ENCODE measurements at regions of chr14 and their contacts with region 1.

Region 1: DNA sequence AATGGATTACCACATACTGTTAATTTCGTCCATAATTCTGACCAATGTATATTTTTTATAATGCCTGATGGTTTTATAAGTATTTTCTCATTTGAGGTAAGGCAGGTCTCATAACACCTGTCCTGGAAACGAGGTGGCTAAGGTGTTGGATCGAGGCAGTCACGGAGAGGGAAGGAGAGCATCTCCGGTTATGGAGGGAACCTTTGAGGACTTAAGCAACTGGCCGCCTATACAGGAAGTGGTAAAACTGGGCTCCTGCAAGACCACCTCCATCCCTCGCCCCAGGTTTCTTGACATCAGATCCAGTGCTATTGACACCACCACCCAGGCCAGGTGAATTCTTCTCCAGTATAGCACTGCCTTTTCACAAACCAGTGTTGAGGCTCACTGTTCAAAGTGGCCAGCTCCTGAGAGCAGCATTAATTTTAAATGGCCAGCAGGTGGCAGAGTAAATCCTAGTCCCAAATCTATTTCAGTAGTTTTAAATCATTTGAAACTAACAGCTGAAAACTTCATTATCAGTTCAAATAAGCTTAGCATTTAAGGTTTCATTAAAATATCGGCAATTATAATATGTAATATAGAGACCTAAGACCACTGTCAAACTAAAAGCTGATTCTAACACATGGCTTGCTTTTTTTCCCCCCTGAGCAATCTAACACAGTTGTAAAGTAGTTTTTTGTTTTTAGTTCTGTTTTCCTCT is 100.8 kb downstream of the PPM1A start:
- DNase-seq: peak; percentile 83
- H3K4me3 ChIP-seq: peak overlapping the region; percentile 57
- H3K27ac ChIP-seq: peak overlapping the region; percentile 95
- H3K4me1 ChIP-seq: peaks cover 61% of the 10 kb centered on the region
- CTCF ChIP-seq: peak; percentile 96

Region 2: DNA sequence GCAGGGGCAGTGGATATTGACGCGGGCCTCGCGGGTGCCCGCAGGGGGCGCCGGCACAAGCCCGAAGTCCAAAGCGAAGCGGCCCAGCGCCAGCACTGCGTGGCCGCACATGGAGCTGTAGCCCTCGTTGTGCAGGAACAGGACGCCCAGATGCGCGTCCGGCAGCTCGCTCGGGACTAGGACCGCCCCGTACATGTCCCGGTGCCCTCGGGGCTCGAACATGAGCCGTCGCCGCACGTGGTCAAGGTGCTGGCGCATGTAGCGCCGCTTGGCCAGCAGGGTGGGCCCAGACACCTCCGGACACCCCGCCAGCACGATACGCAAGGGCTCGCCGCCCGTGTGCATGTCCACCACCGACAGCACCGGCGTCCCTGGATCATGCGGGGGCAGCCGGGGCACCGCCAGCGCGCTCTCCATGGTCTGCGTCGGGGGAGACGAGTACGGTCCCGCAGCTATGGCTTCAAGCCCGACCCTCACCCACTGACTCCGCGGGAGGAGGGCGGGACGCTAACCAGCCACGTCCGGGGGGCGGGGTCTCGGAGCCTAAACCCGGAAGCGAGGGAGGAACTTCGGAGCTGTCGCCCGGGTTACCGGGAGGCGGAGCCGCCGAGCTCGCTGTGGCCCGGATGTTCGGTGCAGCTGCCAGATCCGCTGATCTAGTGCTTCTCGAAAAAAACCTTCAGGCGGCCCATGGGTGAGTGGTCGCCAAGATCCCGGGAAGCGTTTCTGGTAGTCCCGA is 865.7 kb before region 1 on chr14 and contains the starts of genes JKAMP and L3HYPDH:
- CTCF ChIA-PET with region 1: no interaction called
- POLR2A ChIA-PET with region 1: no interaction called
- intact Hi-C with region 1: loop called (anchors 10 kb)
- DNase-seq: peak; percentile 98
- H3K4me3 ChIP-seq: peak within 1 kb of the TSS; percentile 87
- H3K27ac ChIP-seq: peak within 1 kb of the TSS; percentile 58
- H3K4me1 ChIP-seq: peaks cover 38% of the 10 kb centered on the region
- CTCF ChIP-seq: peak; percentile 69
- total RNA-seq, gene JKAMP: 19.7 and 24.9 TPM in 2 replicates
- total RNA-seq, gene L3HYPDH: 43.2 and 43.5 TPM in 2 replicates

Region 3: GRCh38 chr14:60091550-60092530 is 258.0 kb before region 1 on chr14 and contains the start of gene PCNX4:
- CTCF ChIA-PET with region 1: no interaction called
- POLR2A ChIA-PET with region 1: no interaction called
- intact Hi-C with region 1: loop called (anchors 5 kb)
- DNase-seq: peak; percentile 99
- H3K4me3 ChIP-seq: peak within 1 kb of the TSS; percentile 82
- H3K27ac ChIP-seq: peak within 1 kb of the TSS; percentile 86
- H3K4me1 ChIP-seq: peaks cover 33% of the 10 kb centered on the region
- CTCF ChIP-seq: no peak
- total RNA-seq, gene PCNX4: 47.0 and 49.1 TPM in 2 replicates

Region 4: DNA sequence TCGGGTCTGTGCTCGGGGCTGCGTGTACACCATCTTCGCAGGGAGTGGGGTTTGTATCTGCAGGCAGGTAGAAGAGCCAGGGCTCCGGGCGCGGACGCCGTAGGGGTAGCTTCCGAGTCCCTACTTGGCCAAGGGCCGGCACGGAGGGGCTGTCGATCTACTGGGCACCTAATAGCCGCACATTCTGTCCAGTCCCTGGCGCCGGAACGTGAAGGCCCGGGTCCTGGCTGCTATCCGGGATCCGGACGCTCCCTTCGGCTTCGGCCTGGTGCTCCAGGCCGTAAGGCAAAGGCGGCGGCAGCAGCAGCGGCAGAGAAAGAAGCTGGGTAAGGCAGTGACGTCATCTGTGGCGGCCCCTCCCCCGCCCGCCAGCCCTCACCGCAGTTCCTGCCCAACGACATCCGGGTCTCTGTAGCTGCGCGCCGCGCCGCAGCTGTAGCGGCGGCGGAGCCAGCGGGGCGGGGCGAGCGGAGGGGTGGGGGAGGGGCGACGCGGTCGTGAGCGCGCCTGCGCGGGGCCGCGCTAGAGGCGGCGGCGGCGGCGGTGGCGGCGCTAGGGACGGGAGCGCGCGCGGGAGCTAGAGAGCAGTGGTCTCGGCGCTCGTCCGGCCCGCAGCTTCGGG is 101.0 kb before region 1 on chr14 and contains the start of gene PPM1A:
- CTCF ChIA-PET with region 1: interaction called, 5 read pairs
- POLR2A ChIA-PET with region 1: interaction called, 15 read pairs
- intact Hi-C with region 1: loop called (anchors 1 kb)
- DNase-seq: peak; percentile 97
- H3K4me3 ChIP-seq: peak within 1 kb of the TSS; percentile 87
- H3K27ac ChIP-seq: peak within 1 kb of the TSS; percentile 92
- H3K4me1 ChIP-seq: peaks cover 55% of the 10 kb centered on the region
- CTCF ChIP-seq: no peak
- total RNA-seq, gene PPM1A: 25.4 and 28.8 TPM in 2 replicates

Region 5: GRCh38 chr14:60294411-60295069 is 55.3 kb before region 1 on chr14:
- CTCF ChIA-PET with region 1: no interaction called
- POLR2A ChIA-PET with region 1: no interaction called
- intact Hi-C with region 1: no loop called
- DNase-seq: no peak
- H3K4me3 ChIP-seq: no peak overlapping the region
- H3K27ac ChIP-seq: no peak overlapping the region
- H3K4me1 ChIP-seq: no peaks in the 10 kb centered on the region
- CTCF ChIP-seq: no peak

Region 6: DNA sequence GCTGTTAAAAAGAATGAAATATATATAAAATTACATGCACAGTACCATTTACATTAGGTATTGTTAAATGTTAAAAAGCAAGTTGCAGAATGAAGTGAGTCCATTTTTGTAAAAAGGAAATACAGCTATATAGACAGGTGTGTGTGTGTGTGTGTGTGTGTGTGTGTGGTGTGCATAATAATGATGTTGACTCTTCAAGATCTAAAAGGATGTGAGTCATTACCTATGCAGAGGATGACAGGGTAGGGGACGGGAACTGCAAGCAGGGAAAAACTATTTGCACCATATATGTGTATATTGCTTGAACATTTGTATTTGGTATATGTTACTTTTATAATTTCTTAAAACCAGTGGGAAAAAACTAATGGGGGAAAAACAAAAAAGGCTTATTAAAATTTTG is 132.9 kb after region 1 on chr14:
- CTCF ChIA-PET with region 1: no interaction called
- POLR2A ChIA-PET with region 1: no interaction called
- intact Hi-C with region 1: no loop called
- DNase-seq: no peak
- H3K4me3 ChIP-seq: no peak overlapping the region
- H3K27ac ChIP-seq: no peak overlapping the region
- H3K4me1 ChIP-seq: no peaks in the 10 kb centered on the region
- CTCF ChIP-seq: no peak

Region 7: DNA sequence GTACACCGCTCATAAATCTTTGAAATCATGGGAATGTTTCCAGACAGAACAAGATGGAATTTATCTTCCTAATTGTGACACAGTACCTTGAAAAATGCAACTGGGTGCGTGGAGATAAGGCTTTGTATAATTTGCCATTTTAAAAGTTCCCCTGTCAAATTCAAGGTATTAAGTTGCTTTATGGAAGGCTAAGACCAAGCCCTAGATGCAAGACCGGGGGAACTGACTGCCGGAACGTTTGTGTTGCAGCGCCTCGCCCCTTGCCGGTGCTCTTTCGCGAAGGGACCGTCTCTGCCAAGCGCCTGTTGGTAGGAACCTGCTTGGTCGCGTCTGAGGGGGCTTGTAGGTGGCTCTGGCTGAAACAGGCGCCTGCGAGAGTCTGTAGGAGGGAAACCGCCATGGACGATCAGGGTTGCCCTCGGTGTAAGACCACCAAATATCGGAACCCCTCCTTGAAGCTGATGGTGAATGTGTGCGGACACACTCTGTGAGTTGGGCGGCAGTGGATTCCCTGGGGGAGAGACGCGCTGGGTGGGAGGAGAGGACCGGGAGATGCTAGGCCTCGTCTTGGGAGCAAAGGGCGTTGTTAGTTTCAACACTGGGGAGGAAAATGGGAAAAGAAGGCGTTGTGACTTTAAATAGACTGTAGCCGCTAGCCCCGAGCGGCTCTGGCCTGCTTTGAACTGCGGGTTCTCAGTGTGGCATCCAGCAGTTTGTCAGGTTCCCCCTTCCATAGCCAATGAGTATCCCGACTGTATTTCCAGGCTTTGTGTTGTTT is 384.8 kb after region 1 on chr14 and contains the start of gene MNAT1:
- CTCF ChIA-PET with region 1: no interaction called
- POLR2A ChIA-PET with region 1: no interaction called
- intact Hi-C with region 1: loop called (anchors 10 kb)
- DNase-seq: peak; percentile 89
- H3K4me3 ChIP-seq: peak within 1 kb of the TSS; percentile 90
- H3K27ac ChIP-seq: peak within 1 kb of the TSS; percentile 21
- H3K4me1 ChIP-seq: peaks cover 10% of the 10 kb centered on the region
- CTCF ChIP-seq: no peak
- total RNA-seq, gene MNAT1: 58.5 and 72.0 TPM in 2 replicates